ENCODE measurements at regions of chr6 and their contacts with region 1.

Region 1: GRCh38 chr6:33248925-33249731 is 22.5 kb downstream of the VPS52 start:
- DNase-seq: peak; percentile 95
- CTCF ChIP-seq: no peak

Region 2: DNA sequence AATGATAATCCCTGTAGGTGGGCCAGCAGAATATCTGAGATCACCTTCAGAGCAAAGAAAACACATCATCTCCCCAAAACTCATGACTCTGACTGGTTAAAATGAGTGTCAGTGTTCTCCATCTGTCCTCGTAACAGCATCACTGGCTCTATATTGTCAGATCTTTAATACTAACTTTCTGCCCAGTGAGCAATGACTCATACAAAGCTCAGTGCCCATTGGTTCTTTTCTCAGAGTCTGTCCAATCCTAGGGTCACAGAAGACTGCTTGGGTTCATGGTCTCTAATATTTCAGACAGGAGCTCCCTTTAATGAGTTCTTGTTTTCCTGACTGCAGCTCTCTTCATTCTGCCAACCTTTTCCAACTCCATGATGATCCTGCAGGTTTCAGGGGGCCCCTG is 137.0 kb before region 1 on chr6:
- CTCF ChIA-PET with region 1: interaction called, 49 read pairs
- POLR2A ChIA-PET with region 1: no interaction called
- DNase-seq: peak; percentile 83
- CTCF ChIP-seq: no peak

Region 3: DNA sequence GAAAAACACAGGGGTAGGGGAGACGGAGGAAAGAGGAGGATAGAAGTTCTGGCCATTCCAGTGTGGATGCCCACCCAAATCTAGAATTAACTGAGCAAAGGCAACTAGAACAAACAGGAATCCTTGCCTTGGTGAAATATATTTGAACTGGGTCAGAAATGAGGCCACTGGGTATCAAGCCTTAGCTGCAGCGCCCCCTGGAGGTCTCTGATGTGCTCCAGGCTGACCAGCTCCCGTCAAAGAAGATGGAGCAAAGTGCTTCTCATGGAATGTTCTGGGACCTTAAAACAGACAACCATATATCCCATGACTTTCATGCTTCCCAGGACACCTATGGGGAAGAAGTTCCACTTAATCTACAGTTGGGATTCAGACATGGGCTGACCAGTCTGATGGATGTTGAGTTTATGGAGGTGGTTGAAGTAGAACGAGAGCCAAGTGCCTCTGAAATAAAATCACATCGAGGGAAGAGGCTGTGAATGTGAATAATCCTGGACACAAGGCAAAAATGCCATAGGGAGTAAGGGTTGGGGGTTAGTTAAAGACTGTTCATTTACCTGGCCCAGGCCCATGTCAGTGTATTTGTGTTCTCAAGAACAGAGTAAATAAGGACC is 122.9 kb before region 1 on chr6:
- CTCF ChIA-PET with region 1: interaction called, 49 read pairs
- POLR2A ChIA-PET with region 1: no interaction called
- DNase-seq: peak; percentile 64
- CTCF ChIP-seq: peak; percentile 58

Region 4: GRCh38 chr6:33161354-33162331 is 87.5 kb before region 1 on chr6:
- CTCF ChIA-PET with region 1: interaction called, 41 read pairs
- POLR2A ChIA-PET with region 1: interaction called, 7 read pairs
- DNase-seq: peak; percentile 92
- CTCF ChIP-seq: peak; percentile 96

Region 5: GRCh38 chr6:33235221-33235634 is 13.9 kb before region 1 on chr6:
- CTCF ChIA-PET with region 1: interaction called, 82 read pairs
- POLR2A ChIA-PET with region 1: no interaction called
- DNase-seq: no peak
- CTCF ChIP-seq: no peak

Region 6: DNA sequence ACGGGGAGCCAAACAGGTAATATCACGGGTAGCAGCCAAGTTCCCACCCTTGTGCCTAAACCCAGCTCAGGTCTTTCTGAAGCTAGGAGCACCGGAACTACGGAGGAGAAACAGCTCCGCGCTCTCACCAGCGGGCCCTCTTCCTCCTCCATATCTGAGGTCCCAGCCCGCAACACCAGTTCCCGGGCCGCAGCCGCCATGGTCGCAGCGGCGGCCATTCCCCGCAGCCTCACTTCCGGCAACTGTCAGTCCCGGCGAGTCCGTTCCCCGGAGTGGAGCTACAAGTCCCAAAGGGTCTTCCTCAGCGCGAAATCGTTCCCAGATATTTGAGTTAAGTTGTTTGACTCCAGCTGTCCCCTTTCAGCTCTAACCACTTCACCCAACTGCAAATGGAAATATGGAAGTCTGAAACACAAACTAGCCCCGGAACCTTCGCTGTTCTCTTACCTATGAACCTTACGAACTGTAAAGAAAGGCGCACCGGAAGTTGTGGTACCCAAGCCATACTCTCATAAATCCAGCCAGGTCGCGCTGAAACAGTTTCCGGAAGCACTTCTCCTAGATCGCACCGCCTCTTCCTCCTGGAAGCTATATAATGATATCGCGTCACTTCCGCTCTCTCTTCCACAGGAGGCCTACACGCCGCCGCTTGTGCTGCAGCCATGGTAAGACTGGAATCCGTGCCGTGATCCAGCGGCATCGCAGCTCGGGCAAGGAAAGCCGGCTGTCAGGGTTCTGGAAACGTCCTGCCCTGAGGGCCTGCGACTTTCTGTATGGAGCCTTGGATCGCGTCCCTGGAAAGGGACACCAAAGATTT is 22.5 kb after region 1 on chr6 and contains the starts of genes RPS18 and VPS52:
- CTCF ChIA-PET with region 1: interaction called, 81 read pairs
- POLR2A ChIA-PET with region 1: interaction called, 10 read pairs
- DNase-seq: peak; percentile 94
- CTCF ChIP-seq: no peak

Region 7: GRCh38 chr6:33323623-33323948 is 74.5 kb after region 1 on chr6:
- CTCF ChIA-PET with region 1: no interaction called
- POLR2A ChIA-PET with region 1: no interaction called
- DNase-seq: no peak
- CTCF ChIP-seq: no peak

Region 8: DNA sequence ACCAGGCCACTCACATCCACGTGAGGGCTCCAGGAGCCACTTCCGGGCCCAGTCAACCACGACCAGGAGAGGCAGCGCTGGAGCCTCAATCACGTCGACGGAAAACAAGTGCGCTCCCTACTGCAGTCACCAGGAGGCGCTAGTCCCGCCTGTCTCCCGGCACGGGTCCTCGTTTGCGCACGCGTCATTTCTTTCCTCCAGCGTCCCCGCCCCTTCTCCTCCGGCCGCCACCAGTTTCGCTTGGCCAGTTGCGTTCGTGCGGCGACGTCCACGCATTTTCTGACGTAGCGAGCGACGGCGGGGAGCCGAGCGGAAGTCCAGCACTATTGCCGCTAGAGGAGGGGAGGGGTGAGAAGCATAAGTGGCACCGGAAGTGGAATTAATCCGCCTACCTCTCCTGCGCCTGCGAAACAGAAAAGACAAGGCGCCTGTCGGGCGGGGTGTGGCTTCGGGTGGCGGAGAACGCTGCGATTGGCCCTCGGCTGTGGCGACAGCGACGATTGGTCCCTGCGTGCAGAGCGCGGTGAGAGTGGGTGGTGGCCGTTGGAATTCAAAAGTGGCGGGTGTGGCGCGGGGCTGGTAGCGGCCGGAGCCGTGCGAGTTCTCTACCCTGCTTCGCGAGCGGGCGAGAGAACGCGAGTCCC is 142.3 kb after region 1 on chr6 and contains the start of gene KIFC1:
- CTCF ChIA-PET with region 1: no interaction called
- POLR2A ChIA-PET with region 1: no interaction called
- DNase-seq: peak; percentile 97
- CTCF ChIP-seq: peak; percentile 91

Measured in GM10248 (cell line).